ENCODE measurements at regions of chr9 and their contacts with region 1.

Region 1: GRCh38 chr9:97598461-97599288 is 34.5 kb downstream of the TSTD2 start:
- DNase-seq: peak; percentile 72
- H3K27ac ChIP-seq: no peak overlapping the region
- CTCF ChIP-seq: peak; percentile 89

Region 2: DNA sequence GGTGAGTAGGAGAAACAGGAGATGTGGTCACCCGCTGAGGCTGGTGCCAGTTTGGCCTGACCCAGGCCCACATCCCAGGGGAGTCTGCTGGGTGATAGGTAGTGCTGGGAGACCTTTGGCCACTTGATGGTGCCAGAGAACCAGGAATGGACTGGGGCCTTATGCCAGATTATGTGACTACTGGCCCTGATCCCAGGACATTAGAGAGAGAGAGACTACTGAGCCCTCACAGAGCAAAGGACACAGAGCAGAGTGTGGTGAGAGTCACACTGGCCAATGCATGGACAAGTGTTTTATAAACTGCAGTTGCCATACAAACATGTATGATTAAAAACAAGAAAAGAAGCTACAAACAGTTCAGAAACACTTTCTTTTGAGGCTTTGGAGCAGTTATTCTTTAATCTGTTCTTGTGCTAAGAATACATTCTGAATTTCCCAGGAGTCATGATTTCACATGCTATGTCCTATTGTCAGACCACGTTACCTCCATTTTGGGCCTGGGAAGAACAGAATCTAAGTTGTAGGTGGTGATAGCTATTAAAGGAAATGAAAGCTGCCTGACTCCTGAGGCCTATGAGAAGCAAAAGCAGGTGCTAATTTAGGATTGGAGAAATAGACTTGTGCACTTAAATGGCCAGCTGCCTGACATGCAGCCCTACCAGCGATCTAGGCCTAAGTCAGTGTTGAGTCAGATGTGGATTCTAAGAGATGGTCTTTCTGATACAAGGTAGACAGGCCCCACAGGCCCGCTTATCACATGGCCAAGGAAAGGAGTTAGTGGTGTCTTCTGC is 129.8 kb before region 1 on chr9:
- CTCF ChIA-PET with region 1: interaction called, 86 read pairs
- POLR2A ChIA-PET with region 1: no interaction called
- DNase-seq: peak; percentile 84
- H3K27ac ChIP-seq: no peak overlapping the region
- CTCF ChIP-seq: peak; percentile 83

Region 3: GRCh38 chr9:97475059-97475458 is 123.6 kb before region 1 on chr9:
- CTCF ChIA-PET with region 1: interaction called, 86 read pairs
- POLR2A ChIA-PET with region 1: no interaction called
- DNase-seq: no peak
- H3K27ac ChIP-seq: no peak overlapping the region
- CTCF ChIP-seq: no peak

Region 4: GRCh38 chr9:97501177-97501971 is 97.3 kb before region 1 on chr9 and contains the start of gene TMOD1:
- CTCF ChIA-PET with region 1: interaction called, 11 read pairs
- POLR2A ChIA-PET with region 1: no interaction called
- DNase-seq: peak; percentile 93
- H3K27ac ChIP-seq: no peak within 1 kb of the TSS
- CTCF ChIP-seq: peak; percentile 70

Region 5: GRCh38 chr9:97615439-97616072 is 16.9 kb after region 1 on chr9:
- CTCF ChIA-PET with region 1: interaction called, 21 read pairs
- POLR2A ChIA-PET with region 1: no interaction called
- DNase-seq: peak; percentile 78
- H3K27ac ChIP-seq: no peak overlapping the region
- CTCF ChIP-seq: peak; percentile 96

Region 6: GRCh38 chr9:97666907-97667686 is 68.4 kb after region 1 on chr9:
- CTCF ChIA-PET with region 1: no interaction called
- POLR2A ChIA-PET with region 1: no interaction called
- DNase-seq: no peak
- H3K27ac ChIP-seq: no peak overlapping the region
- CTCF ChIP-seq: no peak

Measured in RWPE1 (cell line).